OCI-LY7 (cell line): ENCODE measurements at regions of chr14 and their contacts with region 1.

Region 1: GRCh38 chr14:23057757-23058653 is 685 bp upstream of the CDH24 start:
- DNase-seq: peak; percentile 86
- H3K4me3 ChIP-seq: peak overlapping the region; percentile 62
- H3K27ac ChIP-seq: no peak overlapping the region
- H3K4me1 ChIP-seq: peaks cover 27% of the 10 kb centered on the region
- CTCF ChIP-seq: peak; percentile 95

Region 2: GRCh38 chr14:22973217-22974032 is 84.6 kb before region 1 on chr14:
- CTCF ChIA-PET with region 1: interaction called, 8 read pairs
- POLR2A ChIA-PET with region 1: interaction called, 4 read pairs
- intact Hi-C with region 1: loop called (anchors 1 kb)
- DNase-seq: peak; percentile 65
- H3K4me3 ChIP-seq: no peak overlapping the region
- H3K27ac ChIP-seq: no peak overlapping the region
- H3K4me1 ChIP-seq: peaks cover 17% of the 10 kb centered on the region
- CTCF ChIP-seq: peak; percentile 85

Region 3: DNA sequence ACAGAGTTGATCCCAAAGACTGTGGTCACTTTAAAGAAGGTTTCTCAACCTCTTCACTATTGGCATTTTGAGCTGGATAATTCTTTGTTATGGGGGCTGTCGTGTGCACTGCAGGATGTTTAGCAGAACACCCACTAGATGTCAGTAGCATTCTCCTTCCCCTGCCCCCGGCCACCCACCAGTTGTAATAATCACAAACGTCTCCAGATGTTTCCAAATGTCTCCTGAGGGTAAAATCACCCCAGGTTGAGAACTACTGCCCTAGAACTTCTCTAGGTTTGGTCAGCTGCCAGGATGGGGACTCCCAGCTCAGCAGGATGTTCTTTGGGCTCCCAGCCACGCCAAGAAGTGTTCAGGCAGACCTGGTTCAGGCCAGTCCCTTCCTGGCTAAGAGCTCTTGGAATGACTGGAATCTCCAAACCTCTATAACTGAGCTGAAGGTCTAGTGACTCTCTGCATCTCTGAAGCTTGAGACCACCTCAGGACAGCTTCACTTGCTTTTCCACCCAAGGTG is 63.2 kb before region 1 on chr14:
- CTCF ChIA-PET with region 1: interaction called, 18 read pairs
- POLR2A ChIA-PET with region 1: interaction called, 3 read pairs
- intact Hi-C with region 1: loop called (anchors 1 kb)
- DNase-seq: peak; percentile 60
- H3K4me3 ChIP-seq: no peak overlapping the region
- H3K27ac ChIP-seq: no peak overlapping the region
- H3K4me1 ChIP-seq: peaks cover 4% of the 10 kb centered on the region
- CTCF ChIP-seq: peak; percentile 87

Region 4: DNA sequence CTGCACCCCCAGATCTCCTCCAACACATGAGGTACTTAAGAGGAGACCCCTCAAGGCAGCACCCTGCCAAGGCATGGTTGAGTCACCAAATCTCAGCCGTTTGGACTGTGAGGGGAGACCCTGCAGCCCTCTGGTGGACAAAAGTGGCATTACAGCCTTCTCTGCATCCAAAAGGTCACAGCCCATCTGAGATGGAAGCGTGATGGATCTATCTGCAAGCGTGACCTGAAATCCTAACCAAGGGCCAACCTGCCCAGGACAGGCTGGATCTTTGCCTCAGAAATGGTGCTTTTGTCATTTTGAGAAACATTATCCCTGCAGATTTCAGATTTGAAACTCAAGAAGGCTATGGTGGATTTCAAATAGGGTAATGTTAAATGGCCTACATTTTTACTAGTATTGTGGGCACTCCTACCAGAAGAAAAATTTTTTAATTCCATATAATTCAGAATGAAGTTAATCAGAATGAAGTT is 871.9 kb after region 1 on chr14:
- CTCF ChIA-PET with region 1: no interaction called
- POLR2A ChIA-PET with region 1: no interaction called
- intact Hi-C with region 1: no loop called
- DNase-seq: peak; percentile 81
- H3K4me3 ChIP-seq: no peak overlapping the region
- H3K27ac ChIP-seq: no peak overlapping the region
- H3K4me1 ChIP-seq: no peaks in the 10 kb centered on the region
- CTCF ChIP-seq: peak; percentile 95